ENCODE measurements at regions of chr12 and their contacts with region 1.

Region 1: GRCh38 chr12:22334410-22335290 is at the start of gene ST8SIA1:
- DNase-seq: no peak
- H3K4me3 ChIP-seq: peak within 1 kb of the TSS; percentile 67 to 88 (median 80)
- H3K27ac ChIP-seq: peak within 1 kb of the TSS; percentile 80 to 86 (median 84)
- H3K4me1 ChIP-seq: peaks cover 7 to 52% (median 45%) of the 10 kb centered on the region in 4 donors
- H3K27me3 ChIP-seq: peaks cover 0 to 14% (median 0%) of the 10 kb centered on the region in 4 donors
- CTCF ChIP-seq: no peak
- EP300 ChIP-seq: no peak
- POLR2A ChIP-seq: no peak
- total RNA-seq, gene ST8SIA1: 5.1 to 13.6 (median 9.8) TPM

Region 2: DNA sequence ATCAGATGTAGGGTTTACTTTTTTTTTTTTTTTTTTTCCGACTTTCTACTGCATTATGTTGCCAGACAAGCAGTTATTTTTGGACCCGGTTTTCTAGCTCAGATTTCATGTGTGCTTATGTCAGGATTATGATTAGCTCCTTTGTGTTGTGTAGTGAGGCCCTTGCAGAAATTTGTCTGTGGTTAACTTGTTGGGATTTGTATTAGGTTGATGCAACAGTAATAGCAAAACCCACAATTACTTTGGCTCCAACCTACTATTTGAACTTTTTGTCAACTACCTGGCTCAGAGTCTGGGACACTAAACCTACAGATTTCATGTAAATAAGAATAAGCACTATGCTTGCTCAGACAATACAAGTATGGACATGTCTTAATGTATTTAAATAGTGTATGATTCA is 516.0 kb before region 1 on chr12:
- intact Hi-C with region 1: no loop called
- DNase-seq: no peak
- H3K4me3 ChIP-seq: no peak overlapping the region
- H3K27ac ChIP-seq: no peak overlapping the region
- H3K4me1 ChIP-seq: peaks cover 16 to 30% (median 21%) of the 10 kb centered on the region in 4 donors
- H3K27me3 ChIP-seq: no peaks in the 10 kb centered on the region
- CTCF ChIP-seq: no peak
- EP300 ChIP-seq: no peak
- POLR2A ChIP-seq: no peak

Region 3: DNA sequence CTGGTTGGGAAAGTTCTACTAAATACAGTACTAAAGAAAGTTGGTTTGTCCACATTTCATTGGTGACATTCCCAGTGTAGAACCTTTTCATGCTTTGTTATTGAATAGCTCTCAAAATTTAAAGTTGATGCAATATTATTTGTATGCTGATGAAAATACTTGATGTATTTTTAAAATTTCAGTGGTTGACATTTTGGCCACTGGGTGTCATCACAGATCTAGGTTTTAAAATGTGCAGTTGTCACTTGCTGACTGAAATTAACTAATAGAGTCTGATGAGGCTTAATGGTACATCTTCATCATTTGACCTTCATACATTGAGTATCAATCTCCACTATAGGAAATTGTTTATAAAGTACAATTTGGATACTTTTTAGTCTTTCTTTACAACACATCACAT is 251.5 kb before region 1 on chr12:
- intact Hi-C with region 1: loop called (anchors 5 kb)
- DNase-seq: no peak
- H3K4me3 ChIP-seq: no peak overlapping the region
- H3K27ac ChIP-seq: no peak overlapping the region
- H3K4me1 ChIP-seq: no peaks in the 10 kb centered on the region
- H3K27me3 ChIP-seq: no peaks in the 10 kb centered on the region
- CTCF ChIP-seq: peak; percentile 59 to 66 (median 60)
- EP300 ChIP-seq: no peak
- POLR2A ChIP-seq: no peak

Region 4: GRCh38 chr12:22100958-22101748 is 233.5 kb before region 1 on chr12:
- intact Hi-C with region 1: loop called (anchors 5 kb)
- DNase-seq: no peak
- H3K4me3 ChIP-seq: no peak overlapping the region
- H3K27ac ChIP-seq: no peak overlapping the region
- H3K4me1 ChIP-seq: no peaks in the 10 kb centered on the region
- H3K27me3 ChIP-seq: no peaks in the 10 kb centered on the region
- CTCF ChIP-seq: peak; percentile 39 to 53 (median 44)
- EP300 ChIP-seq: no peak
- POLR2A ChIP-seq: no peak

Region 5: GRCh38 chr12:22160396-22161003 is 174.2 kb before region 1 on chr12:
- intact Hi-C with region 1: no loop called
- DNase-seq: no peak
- H3K4me3 ChIP-seq: no peak overlapping the region
- H3K27ac ChIP-seq: no peak overlapping the region
- H3K4me1 ChIP-seq: peaks cover 0 to 7% (median 0%) of the 10 kb centered on the region in 4 donors
- H3K27me3 ChIP-seq: no peaks in the 10 kb centered on the region
- CTCF ChIP-seq: no peak
- EP300 ChIP-seq: no peak
- POLR2A ChIP-seq: no peak

Region 6: GRCh38 chr12:22283006-22283506 is 51.6 kb before region 1 on chr12:
- intact Hi-C with region 1: loop called (anchors 5 kb)
- DNase-seq: no peak
- H3K4me3 ChIP-seq: peak overlapping the region in 2 of 4 donors; percentile 12 to 29
- H3K27ac ChIP-seq: peak overlapping the region; percentile 51 to 69 (median 62)
- H3K4me1 ChIP-seq: peaks cover 0 to 38% (median 35%) of the 10 kb centered on the region in 4 donors
- H3K27me3 ChIP-seq: no peaks in the 10 kb centered on the region
- CTCF ChIP-seq: no peak
- EP300 ChIP-seq: no peak
- POLR2A ChIP-seq: no peak

Region 7: GRCh38 chr12:22443379-22444316 is 109.0 kb after region 1 on chr12:
- intact Hi-C with region 1: loop called (anchors 2 kb)
- DNase-seq: no peak
- H3K4me3 ChIP-seq: no peak overlapping the region
- H3K27ac ChIP-seq: no peak overlapping the region
- H3K4me1 ChIP-seq: peaks cover 0 to 9% (median 3%) of the 10 kb centered on the region in 4 donors
- H3K27me3 ChIP-seq: no peaks in the 10 kb centered on the region
- CTCF ChIP-seq: peak; percentile 68 to 84 (median 79)
- EP300 ChIP-seq: no peak
- POLR2A ChIP-seq: no peak

Measured in esophagus muscularis mucosa (tissue), 4 donors.